Pancreas (tissue), 10 donors: ENCODE measurements at regions of chr1 and their contacts with region 1.

Region 1: DNA sequence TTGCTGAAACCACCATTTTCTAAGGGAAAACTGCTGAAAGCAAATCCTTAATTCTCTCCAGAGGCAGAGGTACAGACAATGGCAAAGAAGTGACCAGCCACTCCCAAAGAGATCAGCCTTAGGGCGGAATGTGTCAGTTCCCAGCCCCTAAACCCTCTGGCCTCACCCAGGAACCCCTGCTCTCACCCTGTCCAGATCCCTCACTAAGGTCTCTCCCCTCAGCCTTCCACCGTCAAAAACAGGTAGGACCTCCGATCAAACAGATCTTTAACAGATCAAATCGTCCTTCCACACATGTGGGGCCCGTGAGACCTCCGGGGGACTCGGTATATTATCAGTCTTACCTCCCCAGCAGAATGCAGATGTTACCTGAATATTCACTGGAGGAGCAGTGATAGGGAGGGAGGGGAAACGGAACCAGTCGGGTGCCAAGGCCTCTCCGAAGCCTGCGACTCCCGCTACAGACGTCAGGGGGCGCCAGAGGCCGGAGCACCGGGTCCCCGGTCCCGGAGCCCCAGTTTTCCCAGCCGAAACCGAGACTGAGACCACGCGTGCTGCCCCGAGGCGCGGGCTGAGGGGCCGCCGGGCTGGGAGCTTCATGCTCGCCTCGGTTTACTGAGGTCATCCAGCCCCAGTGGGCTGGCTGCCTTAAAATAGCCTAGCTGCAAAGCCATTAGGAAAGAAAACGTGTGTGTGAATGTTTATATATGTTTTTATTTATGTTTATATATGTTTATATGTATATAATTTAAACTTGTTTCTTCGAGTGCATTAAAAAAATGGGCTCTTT is 23.6 kb downstream of the GPA33 start:
- DNase-seq: peak; percentile 48 to 96 (median 78)
- ATAC-seq: peak; percentile 89 to 100 (median 98)
- H3K4me3 ChIP-seq: peak overlapping the region in 1 of 4 donors; percentile 22
- H3K27ac ChIP-seq: no peak overlapping the region
- H3K4me1 ChIP-seq: peaks cover 0 to 3% (median 0%) of the 10 kb centered on the region in 3 donors
- H3K27me3 ChIP-seq: no peaks in the 10 kb centered on the region
- CTCF ChIP-seq: peak; percentile 88 to 97 (median 96)

Region 2: GRCh38 chr1:167533851-167534300 is 467.3 kb after region 1 on chr1:
- intact Hi-C with region 1: loop called in 1 of 3 experiments (anchors 10 kb)
- DNase-seq: peak in 5 of 6 donors; percentile 37 to 78 (median 64)
- ATAC-seq: peak; percentile 85 to 97 (median 94)
- H3K4me3 ChIP-seq: no peak overlapping the region
- H3K27ac ChIP-seq: no peak overlapping the region
- H3K4me1 ChIP-seq: no peaks in the 10 kb centered on the region
- H3K27me3 ChIP-seq: no peaks in the 10 kb centered on the region
- CTCF ChIP-seq: peak; percentile 81 to 93 (median 84)